ENCODE measurements at regions of chr7 and their contacts with region 1.

Region 1: DNA sequence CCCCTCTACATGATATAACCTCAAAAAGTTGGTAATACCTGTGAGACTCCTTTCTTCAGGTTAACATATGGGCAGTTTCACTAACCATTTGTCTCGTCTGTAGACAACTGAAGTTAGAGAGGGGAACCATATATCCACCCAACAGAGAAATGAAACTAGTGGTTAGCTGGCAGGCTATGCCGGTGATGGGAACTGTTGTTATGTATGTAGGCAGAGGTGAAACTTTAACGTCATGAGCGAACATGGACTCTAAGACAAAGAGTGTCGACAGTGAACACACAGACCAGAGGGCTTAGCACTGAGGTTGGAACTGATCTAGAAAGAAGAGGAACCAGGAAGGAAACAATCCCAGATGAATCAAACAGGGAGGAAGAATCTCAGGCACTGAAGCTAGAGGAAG is 112.4 kb downstream of the ELMO1 start:
- DNase-seq: peak; percentile 65
- ATAC-seq: peak; percentile 86
- H3K4me3 Mint-ChIP-seq: peak overlapping the region; percentile 70
- H3K27ac Mint-ChIP-seq: peak overlapping the region; percentile 87
- H3K4me1 Mint-ChIP-seq: peaks cover 82% of the 10 kb centered on the region
- H3K27me3 Mint-ChIP-seq: no peaks in the 10 kb centered on the region

Region 2: GRCh38 chr7:37284805-37285231 is 51.4 kb before region 1 on chr7:
- CTCF ChIA-PET with region 1: interaction called, 10 read pairs
- DNase-seq: peak; percentile 54
- ATAC-seq: peak; percentile 30
- H3K4me3 Mint-ChIP-seq: no peak overlapping the region
- H3K27ac Mint-ChIP-seq: no peak overlapping the region
- H3K4me1 Mint-ChIP-seq: peaks cover 29% of the 10 kb centered on the region
- H3K27me3 Mint-ChIP-seq: no peaks in the 10 kb centered on the region

Measured in activated CD8-positive, alpha-beta memory T cell treated with anti-CD3 and anti-CD28 coated beads, Interleukin-2, amount 10 ng/mL, durations not matched to agents 7 days and 5 days (primary cell).